ENCODE measurements at regions of chr5 and their contacts with region 1.

Region 1: GRCh38 chr5:36722900-36723299 is 116.5 kb downstream of the SLC1A3 start:
- DNase-seq: no peak
- ATAC-seq: no peak

Region 2: GRCh38 chr5:36744773-36745589 is 22.1 kb after region 1 on chr5:
- intact Hi-C with region 1: loop called (anchors 1 kb)
- DNase-seq: peak; percentile 62
- ATAC-seq: peak; percentile 75